ENCODE measurements at regions of chr2 and their contacts with region 1.

Region 1: DNA sequence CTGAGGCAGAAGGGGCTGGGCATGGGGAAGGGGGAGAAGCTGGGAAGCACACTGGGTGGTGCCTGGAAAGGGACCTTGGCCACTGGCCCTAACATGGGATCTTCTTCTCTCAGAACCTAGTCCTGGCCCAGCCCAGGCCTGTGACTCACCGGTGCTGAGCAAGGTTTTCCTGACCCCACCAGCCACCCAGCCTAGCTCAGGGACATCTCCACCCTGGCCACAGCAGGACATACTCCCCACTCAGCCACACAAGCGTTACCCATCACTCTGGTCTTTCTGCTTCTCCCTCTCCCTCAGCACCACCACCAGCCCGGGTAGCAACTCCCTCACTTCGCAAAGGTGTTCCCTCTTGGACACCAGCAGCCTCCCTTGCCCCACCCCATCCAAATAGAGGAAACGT is 22.8 kb downstream of the TNS1 start:
- DNase-seq: no peak
- H3K4me3 ChIP-seq: no peak overlapping the region
- H3K27ac ChIP-seq: no peak overlapping the region
- H3K4me1 ChIP-seq: peaks cover 3% of the 10 kb centered on the region
- H3K27me3 ChIP-seq: peaks cover 10% of the 10 kb centered on the region
- CTCF ChIP-seq: no peak

Region 2: GRCh38 chr2:218026676-218027425 is 46.8 kb after region 1 on chr2:
- CTCF ChIA-PET with region 1: no interaction called
- dilution Hi-C with region 1: loop called (anchors 5 kb)
- in situ Hi-C with region 1: no loop called
- intact Hi-C with region 1: no loop called
- DNase-seq: no peak
- H3K4me3 ChIP-seq: no peak overlapping the region
- H3K27ac ChIP-seq: no peak overlapping the region
- H3K4me1 ChIP-seq: peaks cover 5% of the 10 kb centered on the region
- H3K27me3 ChIP-seq: no peaks in the 10 kb centered on the region
- CTCF ChIP-seq: no peak

Region 3: DNA sequence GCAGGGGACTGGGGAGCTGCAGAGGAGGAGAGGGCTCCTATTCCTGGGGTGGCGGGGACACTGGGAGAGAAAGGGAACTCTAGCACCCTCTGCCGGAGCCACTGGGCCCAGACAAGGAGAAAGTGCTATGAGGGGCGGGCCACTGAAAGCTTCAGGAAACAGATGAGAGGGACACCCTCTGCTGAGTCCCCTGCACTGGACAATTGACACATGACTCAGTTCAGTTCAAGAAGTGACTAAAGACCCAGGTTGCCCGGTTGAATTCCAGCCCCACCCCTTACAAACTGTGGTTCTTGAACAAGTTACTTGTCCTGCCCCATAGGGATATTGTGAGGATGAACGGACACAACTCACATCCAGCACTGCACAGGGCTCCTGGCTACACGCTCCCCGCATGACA is 94.0 kb after region 1 on chr2:
- CTCF ChIA-PET with region 1: no interaction called
- dilution Hi-C with region 1: loop called (anchors 5 kb)
- in situ Hi-C with region 1: no loop called
- intact Hi-C with region 1: no loop called
- DNase-seq: no peak
- H3K4me3 ChIP-seq: no peak overlapping the region
- H3K27ac ChIP-seq: no peak overlapping the region
- H3K4me1 ChIP-seq: no peaks in the 10 kb centered on the region
- H3K27me3 ChIP-seq: no peaks in the 10 kb centered on the region
- CTCF ChIP-seq: no peak